Activated naive CD8-positive, alpha-beta T cell treated with anti-CD3 and anti-CD28 coated beads, Interleukin-2, amount 10 ng/mL, durations not matched to agents 7 days and 5 days (primary cell): ENCODE measurements at regions of chr5 and their contacts with region 1.

Region 1: DNA sequence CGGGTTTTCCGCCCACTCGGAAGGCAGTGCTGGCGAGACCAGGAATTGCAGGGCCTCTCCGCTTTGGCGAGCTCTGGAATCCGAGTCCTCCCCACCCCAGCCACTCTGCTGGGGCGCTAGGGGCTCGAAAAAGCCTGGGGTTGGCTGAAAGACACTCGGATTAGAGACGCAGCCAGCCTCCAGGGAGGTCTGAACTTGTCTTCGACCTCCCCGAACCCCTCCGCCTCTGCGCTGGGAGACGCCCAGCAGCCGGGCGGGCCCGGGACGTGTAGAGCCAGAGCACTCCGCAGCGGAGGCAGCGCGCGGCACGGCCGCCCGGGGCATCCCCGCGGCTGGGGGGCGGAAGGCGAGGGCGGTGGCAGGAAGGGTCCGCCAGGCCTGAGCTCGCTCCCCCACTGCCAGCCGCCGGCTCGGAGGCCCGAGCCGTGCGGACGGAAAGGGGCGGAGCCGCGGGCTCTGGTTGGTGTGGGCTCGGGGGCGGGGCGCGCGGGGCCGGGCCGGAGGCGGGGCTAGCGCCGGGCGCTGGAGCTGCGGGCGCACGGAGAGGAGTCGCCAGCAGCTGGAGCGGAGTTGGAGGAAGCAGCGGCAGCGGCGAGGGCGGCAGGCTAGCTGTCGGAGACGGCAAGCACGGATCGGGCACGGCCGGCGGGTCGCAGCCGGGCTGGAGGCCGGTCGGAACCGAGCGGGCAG is at the start of gene PIK3R1:
- DNase-seq: peak; percentile 98
- ATAC-seq: peak; percentile 74
- H3K4me3 Mint-ChIP-seq: peak within 1 kb of the TSS; percentile 94
- H3K27ac Mint-ChIP-seq: peak within 1 kb of the TSS; percentile 95
- H3K4me1 Mint-ChIP-seq: peaks cover 29% of the 10 kb centered on the region
- H3K27me3 Mint-ChIP-seq: no peaks in the 10 kb centered on the region
- total RNA-seq, gene PIK3R1: 86.5 to 86.8 TPM

Region 2: DNA sequence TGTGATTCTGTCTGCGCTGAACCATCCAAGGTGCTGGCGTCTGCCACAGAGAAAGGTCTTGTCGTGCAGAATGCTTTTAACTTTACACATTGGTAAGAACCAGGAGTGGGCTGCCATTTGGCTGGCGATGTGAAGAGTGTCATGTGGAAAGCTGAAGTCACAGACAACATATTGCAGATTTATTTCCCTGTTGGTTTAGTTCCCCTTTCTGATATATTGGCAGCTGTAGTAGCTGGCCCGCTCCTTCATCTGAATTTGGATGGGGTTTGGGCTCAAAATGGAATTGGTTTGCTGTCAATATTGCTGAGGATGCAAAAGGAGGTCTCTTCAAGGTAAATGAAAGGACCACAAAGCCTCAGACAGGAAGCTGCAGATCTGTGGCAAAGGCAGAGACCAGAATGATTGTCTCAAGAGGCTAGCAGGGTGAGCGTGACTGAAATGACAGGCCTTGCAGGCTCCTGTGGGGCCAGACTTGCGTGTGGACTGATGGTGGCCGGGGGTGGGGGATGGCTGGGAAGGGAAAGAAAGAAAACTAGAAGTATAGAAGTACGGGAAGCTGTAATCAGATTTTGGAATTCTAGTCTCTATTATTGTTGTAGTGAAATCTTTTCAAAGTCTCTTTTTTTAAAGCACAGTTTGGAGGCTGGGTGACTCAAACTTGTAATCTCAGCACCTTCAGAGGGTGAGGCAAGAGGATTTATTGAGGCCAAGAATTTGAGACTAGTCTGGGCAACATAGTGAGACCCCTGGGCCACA is 993.7 kb before region 1 on chr5:
- POLR2A ChIA-PET with region 1: interaction called, 11 read pairs
- DNase-seq: peak; percentile 58
- ATAC-seq: peak; percentile 86
- H3K4me3 Mint-ChIP-seq: peak overlapping the region; percentile 76
- H3K27ac Mint-ChIP-seq: peak overlapping the region; percentile 93
- H3K4me1 Mint-ChIP-seq: peaks cover 60% of the 10 kb centered on the region
- H3K27me3 Mint-ChIP-seq: no peaks in the 10 kb centered on the region

Region 3: GRCh38 chr5:68088302-68088701 is 127.1 kb before region 1 on chr5:
- POLR2A ChIA-PET with region 1: no interaction called
- DNase-seq: no peak
- ATAC-seq: no peak
- H3K4me3 Mint-ChIP-seq: no peak overlapping the region
- H3K27ac Mint-ChIP-seq: no peak overlapping the region
- H3K4me1 Mint-ChIP-seq: no peaks in the 10 kb centered on the region
- H3K27me3 Mint-ChIP-seq: no peaks in the 10 kb centered on the region

Region 4: DNA sequence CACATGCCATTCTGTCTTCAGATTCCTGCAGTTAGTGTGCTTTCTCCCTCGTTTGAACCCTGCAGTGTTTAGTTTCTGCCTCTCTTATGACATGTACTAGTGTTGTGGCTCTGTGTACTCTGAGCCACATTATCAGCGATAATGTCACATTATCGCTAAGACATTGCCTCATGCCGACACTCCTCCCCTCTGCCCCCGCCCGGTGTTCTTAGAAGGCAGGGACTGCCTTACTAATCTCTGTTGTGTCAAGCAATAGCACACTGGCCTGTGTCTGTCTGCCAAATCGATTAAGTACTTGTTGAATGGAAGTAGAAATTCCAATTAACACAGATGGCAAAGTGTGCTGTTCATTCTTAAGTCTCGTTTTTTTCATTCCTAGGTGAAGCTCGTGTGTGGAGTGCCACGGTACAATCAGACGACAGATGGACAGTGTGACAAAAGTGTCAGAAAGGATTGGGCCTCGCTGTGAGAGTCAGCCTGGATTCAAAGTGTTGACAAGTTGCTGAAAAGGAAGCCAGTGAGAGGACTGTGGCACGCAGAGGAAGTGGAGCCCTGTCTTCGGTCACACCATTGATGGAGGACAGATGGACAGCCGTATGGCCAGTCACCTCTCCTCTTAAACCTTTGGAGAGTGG is 10.7 kb after region 1 on chr5:
- POLR2A ChIA-PET with region 1: interaction called, 11 read pairs
- DNase-seq: no peak
- ATAC-seq: no peak
- H3K4me3 Mint-ChIP-seq: no peak overlapping the region
- H3K27ac Mint-ChIP-seq: no peak overlapping the region
- H3K4me1 Mint-ChIP-seq: peaks cover 60% of the 10 kb centered on the region
- H3K27me3 Mint-ChIP-seq: no peaks in the 10 kb centered on the region

Region 5: GRCh38 chr5:68239487-68239886 is 24.1 kb after region 1 on chr5:
- POLR2A ChIA-PET with region 1: interaction called, 13 read pairs
- DNase-seq: peak; percentile 74
- ATAC-seq: peak; percentile 94
- H3K4me3 Mint-ChIP-seq: peak overlapping the region; percentile 65
- H3K27ac Mint-ChIP-seq: peak overlapping the region; percentile 85
- H3K4me1 Mint-ChIP-seq: peaks cover 62% of the 10 kb centered on the region
- H3K27me3 Mint-ChIP-seq: no peaks in the 10 kb centered on the region

Region 6: GRCh38 chr5:68251386-68251785 is 36.0 kb after region 1 on chr5:
- POLR2A ChIA-PET with region 1: interaction called, 17 read pairs
- DNase-seq: no peak
- ATAC-seq: peak; percentile 63
- H3K4me3 Mint-ChIP-seq: no peak overlapping the region
- H3K27ac Mint-ChIP-seq: peak overlapping the region; percentile 52
- H3K4me1 Mint-ChIP-seq: peaks cover 47% of the 10 kb centered on the region
- H3K27me3 Mint-ChIP-seq: no peaks in the 10 kb centered on the region

Region 7: DNA sequence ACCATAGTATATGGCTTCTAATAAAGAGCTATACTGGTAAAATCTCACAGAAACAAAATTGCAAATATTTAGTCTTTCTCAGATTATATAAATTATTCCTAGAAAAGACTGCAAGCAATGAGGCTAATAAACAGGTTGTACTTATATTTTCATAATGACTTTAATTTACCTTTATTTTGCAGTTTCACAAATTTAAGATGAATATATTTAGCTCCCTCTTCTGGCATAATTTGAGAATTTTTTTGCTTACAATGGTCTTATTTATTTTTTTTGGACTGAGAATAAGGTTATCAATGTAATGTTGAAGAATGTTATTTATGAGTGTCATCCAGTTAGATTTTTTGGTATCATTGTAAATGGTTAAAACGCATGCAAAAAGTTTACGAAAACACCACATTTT is 56.9 kb after region 1 on chr5:
- POLR2A ChIA-PET with region 1: interaction called, 12 read pairs
- DNase-seq: no peak
- ATAC-seq: no peak
- H3K4me3 Mint-ChIP-seq: no peak overlapping the region
- H3K27ac Mint-ChIP-seq: no peak overlapping the region
- H3K4me1 Mint-ChIP-seq: peaks cover 47% of the 10 kb centered on the region
- H3K27me3 Mint-ChIP-seq: no peaks in the 10 kb centered on the region

Region 8: DNA sequence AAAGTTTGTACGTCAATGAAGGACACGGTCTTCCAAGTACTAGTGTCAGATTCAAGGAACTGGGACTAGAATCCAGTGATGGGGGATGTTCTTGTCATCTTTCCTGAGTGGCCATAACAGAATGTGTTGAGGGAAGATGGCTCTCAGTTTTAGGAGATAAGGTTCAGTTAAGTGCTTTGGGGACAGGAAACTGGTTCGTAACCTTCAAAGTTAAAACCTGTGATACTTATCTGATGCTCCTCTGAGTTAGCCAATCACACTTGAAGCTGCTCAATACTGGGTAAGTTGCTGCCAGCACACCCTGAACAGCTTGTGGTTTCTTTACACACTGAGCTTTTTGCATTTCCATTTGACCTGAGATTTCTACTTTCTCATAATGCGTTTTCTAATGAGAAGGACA is 64.6 kb after region 1 on chr5:
- POLR2A ChIA-PET with region 1: interaction called, 28 read pairs
- DNase-seq: no peak
- ATAC-seq: peak; percentile 98
- H3K4me3 Mint-ChIP-seq: peak overlapping the region; percentile 80
- H3K27ac Mint-ChIP-seq: peak overlapping the region; percentile 94
- H3K4me1 Mint-ChIP-seq: peaks cover 57% of the 10 kb centered on the region
- H3K27me3 Mint-ChIP-seq: no peaks in the 10 kb centered on the region